ENCODE measurements at regions of chr9 and their contacts with region 1.

Region 1: GRCh38 chr9:88973281-88974152 is 17.8 kb upstream of the S1PR3 start:
- DNase-seq: no peak
- ATAC-seq: no peak
- H3K4me3 ChIP-seq: no peak overlapping the region
- H3K27ac ChIP-seq: no peak overlapping the region
- H3K4me1 ChIP-seq: peaks cover 0 to 12% (median 0%) of the 10 kb centered on the region in 9 donors
- H3K27me3 ChIP-seq: peaks cover 0 to 5% (median 0%) of the 10 kb centered on the region in 7 donors
- CTCF ChIP-seq: no peak

Region 2: GRCh38 chr9:88781628-88782391 is 191.7 kb before region 1 on chr9:
- intact Hi-C with region 1: loop called in 1 of 10 experiments (anchors 10 kb)
- DNase-seq: peak; percentile 33 to 48
- ATAC-seq: peak; percentile 40 to 82 (median 72)
- H3K4me3 ChIP-seq: no peak overlapping the region
- H3K27ac ChIP-seq: peak overlapping the region; percentile 15 to 71 (median 54)
- H3K4me1 ChIP-seq: peaks cover 9 to 50% (median 43%) of the 10 kb centered on the region in 9 donors
- H3K27me3 ChIP-seq: no peaks in the 10 kb centered on the region
- CTCF ChIP-seq: peak; percentile 14 to 70 (median 50)

Measured in heart right ventricle (tissue), 16 donors.